Cardiac septum (tissue), 1 donor: ENCODE measurements at regions of chr4 and their contacts with region 1.

Region 1: DNA sequence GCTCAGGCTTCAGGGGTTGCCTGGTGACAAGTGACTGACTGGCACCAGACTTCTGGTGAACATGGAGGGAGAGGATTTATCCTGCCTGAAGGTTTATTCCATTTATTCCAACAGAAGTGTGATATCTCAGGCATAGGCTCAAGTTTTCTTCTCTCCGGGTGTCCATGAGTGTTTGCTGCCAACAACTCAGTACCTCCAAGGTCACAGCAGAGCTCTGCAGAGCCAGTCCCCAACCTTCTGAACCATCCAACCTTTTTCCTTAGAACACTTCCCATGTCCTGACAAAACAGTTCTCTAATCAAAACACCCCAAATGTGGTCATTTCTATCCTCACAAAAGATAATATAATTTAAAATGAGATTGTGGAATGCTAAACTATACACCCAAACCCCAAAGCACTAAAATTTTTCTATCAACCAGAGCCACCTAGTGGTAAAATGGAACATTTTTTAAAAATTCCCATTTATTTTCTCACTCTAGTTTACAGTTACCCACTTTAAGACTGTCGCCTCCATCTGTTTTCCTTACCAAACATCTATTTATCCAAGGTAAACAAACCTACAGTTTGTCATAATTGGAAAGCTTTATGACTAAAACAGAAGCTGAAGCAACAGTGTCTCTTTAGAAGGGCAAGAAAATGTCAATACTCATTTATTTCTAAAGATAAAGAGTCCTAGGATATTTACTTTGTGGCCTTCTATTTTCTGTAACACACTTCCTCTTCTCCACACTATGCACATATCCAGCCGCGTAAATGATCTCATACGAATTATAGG is 39.6 kb downstream of the TMEM154 start:
- DNase-seq: no peak

Region 2: DNA sequence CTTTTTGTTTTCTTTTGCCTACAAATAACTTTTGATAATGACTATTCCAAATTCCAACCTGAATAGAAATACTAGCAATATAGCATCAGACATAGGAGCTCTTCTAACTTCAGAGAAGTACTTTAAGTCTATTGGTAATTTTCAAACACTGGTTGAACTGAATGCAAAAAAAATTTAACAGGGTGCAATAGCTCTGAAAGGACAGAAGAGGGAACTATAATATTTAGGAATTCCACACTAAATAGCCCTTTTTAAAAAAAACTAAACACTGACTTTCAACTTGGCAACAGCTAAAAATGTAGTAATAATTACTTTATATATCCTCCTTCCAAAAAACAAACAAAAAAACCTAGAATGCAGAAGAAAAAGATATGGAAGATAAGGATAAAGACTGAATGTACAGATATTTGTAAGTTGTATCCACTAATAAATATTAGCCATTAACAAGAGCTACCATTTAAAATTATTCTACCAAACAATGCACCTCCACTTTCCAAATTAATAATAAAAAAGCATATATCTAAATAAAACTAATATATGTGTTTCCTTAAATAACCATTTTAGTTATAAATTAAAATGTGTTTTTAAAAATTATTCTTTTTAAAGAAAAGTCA is 185.7 kb before region 1 on chr4:
- intact Hi-C with region 1: loop called (anchors 5 kb)
- DNase-seq: no peak

Region 3: GRCh38 chr4:152500800-152501434 is 139.3 kb before region 1 on chr4:
- intact Hi-C with region 1: loop called (anchors 5 kb)
- DNase-seq: no peak

Region 4: DNA sequence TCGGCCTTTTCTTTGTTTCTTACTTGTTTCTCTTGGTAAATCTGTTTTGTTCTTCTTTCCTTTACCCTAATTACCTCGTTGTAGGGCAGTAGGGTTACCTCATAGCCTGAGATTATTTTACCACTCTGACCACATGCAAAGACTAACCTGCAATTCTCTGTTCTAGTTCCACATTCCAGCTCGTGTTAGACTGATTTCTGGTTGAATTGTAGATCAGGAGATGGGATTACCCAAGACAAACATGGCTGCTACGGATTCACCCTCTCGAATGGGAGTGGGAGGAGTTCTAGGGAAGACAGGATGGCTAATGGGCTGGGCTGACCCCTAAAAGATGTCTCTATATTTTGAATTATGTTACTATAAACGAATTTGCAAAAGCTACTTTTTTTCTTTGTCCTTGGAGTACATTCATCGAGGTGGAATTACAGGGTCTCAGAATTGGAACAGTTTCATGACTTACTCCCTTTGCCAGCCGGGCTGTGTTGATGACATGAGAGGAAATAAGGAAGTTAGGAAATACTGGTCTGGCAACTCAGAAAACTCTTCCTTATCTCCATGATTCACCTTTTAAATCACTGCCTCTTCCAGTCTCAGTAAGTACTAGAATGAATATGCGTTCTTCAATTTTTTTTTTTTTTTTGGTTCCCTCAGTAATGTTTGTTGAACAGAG is 67.7 kb before region 1 on chr4:
- intact Hi-C with region 1: no loop called
- DNase-seq: no peak

Region 5: DNA sequence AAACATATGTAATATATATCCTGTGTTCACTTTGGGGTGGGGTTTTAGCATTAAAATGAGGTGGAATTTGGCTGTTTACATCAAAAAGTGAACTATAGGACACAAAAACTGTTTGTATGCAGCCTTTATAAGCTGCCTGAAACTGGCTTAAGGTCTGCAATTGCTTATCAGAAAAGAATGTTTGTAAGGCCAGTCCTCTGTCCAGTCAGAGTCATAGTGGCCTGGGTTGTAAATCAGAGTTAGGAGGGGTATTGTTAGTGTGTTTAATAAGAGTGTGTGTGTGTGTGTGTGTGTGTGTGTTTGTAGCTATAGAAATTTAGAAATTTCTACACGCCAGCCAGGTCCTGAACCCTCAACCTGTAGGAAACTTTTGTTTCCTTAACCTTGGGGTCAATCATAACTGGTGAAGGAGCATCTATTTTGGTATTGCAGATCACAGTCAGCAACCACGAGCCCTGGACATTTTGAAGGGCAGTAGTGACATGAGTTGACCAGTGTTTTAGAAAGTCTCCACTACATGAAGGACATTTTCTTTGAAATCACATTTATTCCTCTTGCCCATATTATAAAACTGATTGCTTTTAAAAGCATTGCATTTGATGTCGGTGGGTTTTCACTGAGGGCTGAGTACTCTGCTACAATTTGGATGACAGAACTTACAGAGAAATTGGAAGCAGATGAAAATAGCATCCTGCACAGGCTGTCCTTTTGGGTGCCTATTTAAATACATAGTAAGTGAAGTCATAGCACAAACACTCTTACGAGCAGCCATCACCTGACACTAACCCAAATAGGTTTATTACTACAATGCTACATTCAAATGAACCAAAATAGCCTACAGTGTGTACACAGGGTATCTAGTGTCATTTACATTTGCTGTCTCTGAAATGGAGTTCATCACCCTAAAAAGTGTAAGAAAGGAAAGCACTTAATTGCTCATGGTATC is 50.7 kb after region 1 on chr4:
- intact Hi-C with region 1: loop called (anchors 2 kb)
- DNase-seq: no peak